Right ventricle myocardium inferior (tissue), 1 donor: ENCODE measurements at regions of chr6 and their contacts with region 1.

Region 1: DNA sequence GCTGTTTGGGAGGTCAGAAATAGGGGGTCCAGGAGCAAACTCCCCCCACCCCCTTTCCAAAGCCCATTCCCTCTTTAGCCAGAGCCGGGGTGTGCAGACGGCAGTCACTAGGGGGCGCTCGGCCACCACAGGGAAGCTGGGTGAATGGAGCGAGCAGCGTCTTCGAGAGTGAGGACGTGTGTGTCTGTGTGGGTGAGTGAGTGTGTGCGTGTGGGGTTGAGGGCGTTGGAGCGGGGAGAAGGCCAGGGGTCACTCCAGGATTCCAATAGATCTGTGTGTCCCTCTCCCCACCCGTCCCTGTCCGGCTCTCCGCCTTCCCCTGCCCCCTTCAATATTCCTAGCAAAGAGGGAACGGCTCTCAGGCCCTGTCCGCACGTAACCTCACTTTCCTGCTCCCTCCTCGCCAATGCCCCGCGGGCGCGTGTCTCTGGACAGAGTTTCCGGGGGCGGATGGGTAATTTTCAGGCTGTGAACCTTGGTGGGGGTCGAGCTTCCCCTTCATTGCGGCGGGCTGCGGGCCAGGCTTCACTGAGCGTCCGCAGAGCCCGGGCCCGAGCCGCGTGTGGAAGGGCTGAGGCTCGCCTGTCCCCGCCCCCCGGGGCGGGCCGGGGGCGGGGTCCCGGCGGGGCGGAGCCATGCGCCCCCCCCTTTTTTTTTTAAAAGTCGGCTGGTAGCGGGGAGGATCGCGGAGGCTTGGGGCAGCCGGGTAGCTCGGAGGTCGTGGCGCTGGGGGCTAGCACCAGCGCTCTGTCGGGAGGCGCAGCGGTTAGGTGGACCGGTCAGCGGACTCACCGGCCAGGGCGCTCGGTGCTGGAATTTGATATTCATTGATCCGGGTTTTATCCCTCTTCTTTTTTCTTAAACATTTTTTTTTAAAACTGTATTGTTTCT is at the start of gene VEGFA:
- DNase-seq: peak; percentile 95
- ATAC-seq: peak; percentile 79
- total RNA-seq, gene VEGFA: 242 TPM

Region 2: GRCh38 chr6:43575772-43576551 is 193.8 kb before region 1 on chr6 and contains the starts of genes POLH and XPO5:
- intact Hi-C with region 1: no loop called
- DNase-seq: peak; percentile 95
- ATAC-seq: peak; percentile 100
- total RNA-seq, gene POLH: 5.9 TPM
- total RNA-seq, gene XPO5: 11.7 TPM

Region 3: DNA sequence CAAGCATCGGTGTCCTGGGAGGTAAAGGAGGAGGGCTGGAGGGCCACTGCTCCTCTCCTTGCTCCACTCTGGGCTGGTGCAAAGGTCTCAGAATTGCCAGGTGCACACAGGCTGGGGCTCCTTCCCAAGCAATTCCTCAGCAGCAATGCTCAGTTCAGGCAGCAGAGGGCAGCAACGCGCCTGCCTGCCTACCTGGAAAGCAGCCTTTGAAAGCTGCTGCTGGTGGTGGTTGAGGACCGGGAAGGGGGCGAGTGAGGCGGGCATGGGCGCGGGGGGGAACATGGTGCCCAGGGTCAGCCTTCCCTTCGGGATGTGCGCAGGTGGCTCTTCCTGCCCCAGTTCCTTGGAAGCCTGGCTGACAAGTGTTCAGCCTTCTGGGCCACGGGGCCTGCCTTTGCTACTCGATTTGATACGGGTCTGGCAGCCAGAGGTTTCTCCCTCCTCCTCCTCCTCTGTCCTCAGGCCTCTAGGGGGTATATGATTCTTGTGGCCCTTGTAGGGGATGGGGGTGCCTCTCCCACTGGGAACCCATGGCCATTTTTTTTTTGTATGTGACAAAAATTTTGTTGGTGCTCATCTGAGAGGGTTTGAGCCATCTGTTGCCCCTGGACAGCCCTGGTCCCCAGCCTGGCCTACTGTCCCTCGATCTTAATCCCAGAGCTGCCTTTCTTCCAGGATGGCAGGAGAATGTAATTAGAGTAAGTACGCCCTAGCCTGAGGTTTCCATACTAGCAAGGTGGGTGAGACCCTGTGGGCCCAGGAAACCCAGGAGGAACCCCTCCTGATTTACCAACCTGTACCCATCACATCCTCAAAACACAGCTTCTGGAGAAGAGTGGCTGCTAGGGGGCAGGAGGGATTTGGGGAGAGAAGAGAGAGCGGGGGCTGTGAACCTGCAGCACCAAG is 102.3 kb before region 1 on chr6:
- intact Hi-C with region 1: loop called (anchors 2 kb)
- DNase-seq: peak; percentile 89
- ATAC-seq: peak; percentile 41

Region 4: DNA sequence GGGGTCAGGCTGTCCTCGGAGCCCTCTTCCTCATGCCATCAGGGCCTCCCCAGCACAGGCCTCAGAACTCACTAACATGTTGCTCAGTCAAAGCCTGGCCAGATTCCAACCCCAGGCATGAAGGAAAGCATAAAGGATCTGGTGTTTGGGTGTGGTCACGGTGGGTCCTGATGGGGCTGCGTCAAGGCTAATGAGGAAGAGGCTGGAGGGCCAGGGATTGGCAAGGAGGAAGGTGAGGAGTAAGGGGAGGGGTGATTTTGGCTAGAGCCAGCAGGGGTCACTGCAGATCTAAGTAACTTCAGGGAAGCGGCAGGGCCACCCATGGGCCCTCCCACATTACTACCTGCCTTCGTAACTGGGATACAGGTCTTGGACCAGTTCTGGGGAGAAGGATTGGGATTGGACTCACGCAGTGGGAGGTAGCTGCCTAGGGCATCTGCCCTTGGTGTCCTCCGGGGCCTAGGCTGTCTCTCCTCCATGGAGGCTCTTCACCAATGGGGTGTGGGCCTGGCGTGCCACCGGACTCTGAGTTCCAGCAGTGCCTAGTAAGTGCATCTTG is 46.0 kb before region 1 on chr6:
- intact Hi-C with region 1: loop called (anchors 5 kb)
- DNase-seq: peak; percentile 76
- ATAC-seq: peak; percentile 76

Region 5: GRCh38 chr6:43823879-43824702 is 54.3 kb after region 1 on chr6:
- intact Hi-C with region 1: no loop called
- DNase-seq: no peak
- ATAC-seq: peak; percentile 5

Region 6: GRCh38 chr6:43951063-43951755 is 181.4 kb after region 1 on chr6:
- intact Hi-C with region 1: loop called (anchors 1 kb)
- DNase-seq: peak; percentile 85
- ATAC-seq: peak; percentile 58

Region 7: GRCh38 chr6:44002593-44003344 is 233.0 kb after region 1 on chr6:
- intact Hi-C with region 1: loop called (anchors 5 kb)
- DNase-seq: peak; percentile 77
- ATAC-seq: peak; percentile 33

Region 8: GRCh38 chr6:44221291-44221960 is 451.7 kb after region 1 on chr6:
- intact Hi-C with region 1: loop called (anchors 10 kb)
- DNase-seq: peak; percentile 92
- ATAC-seq: peak; percentile 62